ENCODE measurements at regions of chr6 and their contacts with region 1.

Region 1: GRCh38 chr6:291697-292505 is at the start of gene DUSP22:
- DNase-seq: peak; percentile 94
- H3K4me3 Mint-ChIP-seq: peak within 1 kb of the TSS; percentile 86
- H3K27ac Mint-ChIP-seq: peak within 1 kb of the TSS; percentile 95
- H3K4me1 Mint-ChIP-seq: peaks cover 45% of the 10 kb centered on the region
- H3K27me3 Mint-ChIP-seq: no peaks in the 10 kb centered on the region
- total RNA-seq, gene DUSP22: 22.5 and 24.0 TPM in 2 replicates

Region 2: GRCh38 chr6:227074-227782 is 64.7 kb before region 1 on chr6:
- intact Hi-C with region 1: loop called (anchors 1 kb)
- DNase-seq: no peak
- H3K4me3 Mint-ChIP-seq: no peak overlapping the region
- H3K27ac Mint-ChIP-seq: peak overlapping the region; percentile 58
- H3K4me1 Mint-ChIP-seq: peaks cover 61% of the 10 kb centered on the region
- H3K27me3 Mint-ChIP-seq: no peaks in the 10 kb centered on the region

Region 3: GRCh38 chr6:251920-252319 is 40.0 kb before region 1 on chr6:
- intact Hi-C with region 1: loop called (anchors 5 kb)
- DNase-seq: peak; percentile 61
- H3K4me3 Mint-ChIP-seq: peak overlapping the region; percentile 46
- H3K27ac Mint-ChIP-seq: peak overlapping the region; percentile 80
- H3K4me1 Mint-ChIP-seq: peaks cover 29% of the 10 kb centered on the region
- H3K27me3 Mint-ChIP-seq: no peaks in the 10 kb centered on the region

Region 4: GRCh38 chr6:277746-278145 is 14.2 kb before region 1 on chr6:
- intact Hi-C with region 1: no loop called
- DNase-seq: no peak
- H3K4me3 Mint-ChIP-seq: no peak overlapping the region
- H3K27ac Mint-ChIP-seq: no peak overlapping the region
- H3K4me1 Mint-ChIP-seq: peaks cover 2% of the 10 kb centered on the region
- H3K27me3 Mint-ChIP-seq: peaks cover 9% of the 10 kb centered on the region

Region 5: GRCh38 chr6:319177-320131 is 27.6 kb after region 1 on chr6:
- intact Hi-C with region 1: loop called (anchors 2 kb)
- DNase-seq: no peak
- H3K4me3 Mint-ChIP-seq: no peak overlapping the region
- H3K27ac Mint-ChIP-seq: no peak overlapping the region
- H3K4me1 Mint-ChIP-seq: peaks cover 7% of the 10 kb centered on the region
- H3K27me3 Mint-ChIP-seq: no peaks in the 10 kb centered on the region

Region 6: DNA sequence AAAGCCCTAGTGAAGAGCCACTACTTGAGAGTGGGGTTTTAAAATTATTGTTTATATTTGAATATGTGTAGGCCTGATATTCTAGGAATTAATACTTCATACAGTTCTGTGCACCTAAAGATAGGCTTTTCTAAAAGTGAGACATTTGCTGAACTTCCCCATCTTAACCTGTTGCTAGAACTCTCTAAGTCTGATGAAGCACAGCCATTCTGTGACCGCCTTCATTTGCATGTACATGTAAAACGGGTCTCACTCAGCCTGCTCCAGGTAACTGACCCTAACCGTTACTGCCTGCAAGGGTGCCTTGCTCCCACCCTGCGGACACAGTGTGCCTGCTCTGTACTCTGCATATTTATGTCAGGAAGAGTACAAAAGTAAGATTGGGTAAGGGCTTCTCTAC is 55.3 kb after region 1 on chr6:
- intact Hi-C with region 1: no loop called
- DNase-seq: no peak
- H3K4me3 Mint-ChIP-seq: no peak overlapping the region
- H3K27ac Mint-ChIP-seq: no peak overlapping the region
- H3K4me1 Mint-ChIP-seq: peaks cover under 1% of the 10 kb centered on the region
- H3K27me3 Mint-ChIP-seq: no peaks in the 10 kb centered on the region

Region 7: DNA sequence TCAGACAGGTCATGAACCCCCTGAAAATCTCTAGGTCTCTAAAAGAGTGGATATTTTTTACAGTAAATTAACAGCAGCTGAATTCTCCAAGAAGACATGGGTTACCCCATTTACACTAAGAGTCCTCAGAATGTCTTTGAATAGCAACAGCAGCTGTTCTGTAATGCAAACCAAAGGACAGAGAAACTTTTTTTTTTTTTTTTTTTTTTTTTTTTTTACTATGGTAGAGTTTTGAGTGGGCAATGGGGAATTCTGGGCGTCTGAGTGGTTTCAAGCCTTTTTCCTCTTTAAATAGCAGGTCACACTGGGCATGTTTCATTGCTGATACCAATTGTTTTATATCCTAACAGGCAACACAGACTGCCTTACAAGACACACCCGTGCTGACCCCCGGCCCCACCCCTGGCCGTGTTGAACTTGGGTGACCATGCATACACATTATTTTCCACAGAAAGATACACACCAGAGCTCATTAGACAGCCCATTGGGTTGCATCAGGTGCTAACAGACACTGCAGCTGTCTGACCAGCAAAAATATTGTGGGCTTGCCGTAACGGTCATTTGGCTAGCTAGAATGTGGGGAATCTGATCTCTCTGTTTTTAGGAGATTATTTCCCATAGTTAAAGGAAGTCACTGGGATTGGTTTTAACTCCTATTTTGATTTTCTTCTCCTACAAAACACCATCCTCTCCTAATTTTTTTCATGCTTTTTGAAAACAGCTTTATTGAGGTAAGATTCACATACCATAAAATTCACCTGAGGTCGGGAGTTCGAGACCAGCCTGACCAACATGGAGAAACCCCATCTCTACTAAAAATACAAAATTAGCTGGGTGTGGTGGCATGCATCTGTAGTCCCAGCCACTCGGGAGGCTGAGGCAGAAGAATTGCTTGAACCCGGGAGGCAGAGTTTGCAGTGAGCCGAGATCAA is 73.0 kb after region 1 on chr6:
- intact Hi-C with region 1: no loop called
- DNase-seq: no peak
- H3K4me3 Mint-ChIP-seq: no peak overlapping the region
- H3K27ac Mint-ChIP-seq: no peak overlapping the region
- H3K4me1 Mint-ChIP-seq: no peaks in the 10 kb centered on the region
- H3K27me3 Mint-ChIP-seq: peaks cover 8% of the 10 kb centered on the region

Region 8: GRCh38 chr6:391559-392440 is 99.9 kb after region 1 on chr6 and contains the start of gene IRF4:
- intact Hi-C with region 1: loop called (anchors 1 kb)
- DNase-seq: peak; percentile 92
- H3K4me3 Mint-ChIP-seq: peak within 1 kb of the TSS; percentile 93
- H3K27ac Mint-ChIP-seq: peak within 1 kb of the TSS; percentile 98
- H3K4me1 Mint-ChIP-seq: peaks cover 40% of the 10 kb centered on the region
- H3K27me3 Mint-ChIP-seq: peaks cover 2% of the 10 kb centered on the region
- total RNA-seq, gene IRF4: 831 and 846 TPM in 2 replicates

Region 9: DNA sequence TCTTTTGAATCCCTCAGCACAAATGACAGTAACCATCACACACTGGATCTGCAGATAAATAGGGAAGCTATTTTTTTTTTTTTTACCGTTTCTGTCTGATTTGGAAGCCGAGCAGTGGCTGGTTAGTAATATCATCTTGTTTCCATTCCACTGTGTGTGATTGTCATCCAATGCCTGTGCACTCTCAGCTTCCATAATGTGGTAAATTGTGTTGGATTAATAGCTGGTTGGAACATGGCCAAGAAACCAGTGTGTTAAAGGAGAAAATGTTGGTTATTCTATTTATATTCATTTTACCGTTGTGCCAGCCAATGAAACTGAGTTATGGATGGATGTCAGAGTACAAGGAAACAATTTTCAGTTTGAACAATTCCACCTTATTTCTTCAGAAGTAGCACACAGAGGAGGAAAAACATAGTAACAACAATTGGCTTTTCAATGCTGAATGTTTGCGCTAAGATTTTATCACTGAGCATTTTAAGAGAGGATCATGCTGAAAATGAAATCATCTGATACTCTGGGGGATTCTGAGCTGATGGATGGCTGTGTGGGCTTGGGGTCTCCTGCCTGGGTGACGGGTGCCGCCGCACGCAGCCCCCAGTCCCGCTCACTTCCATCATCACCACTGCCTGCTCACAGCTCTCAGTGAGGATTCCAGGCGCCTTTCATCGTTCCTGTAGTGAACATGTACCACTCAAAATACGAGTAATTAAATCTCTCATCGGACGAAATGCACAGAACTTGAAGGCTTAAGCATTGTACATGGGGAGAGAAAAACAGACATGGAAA is 441.7 kb after region 1 on chr6:
- intact Hi-C with region 1: no loop called
- DNase-seq: no peak
- H3K4me3 Mint-ChIP-seq: no peak overlapping the region
- H3K27ac Mint-ChIP-seq: no peak overlapping the region
- H3K4me1 Mint-ChIP-seq: no peaks in the 10 kb centered on the region
- H3K27me3 Mint-ChIP-seq: peaks cover 29% of the 10 kb centered on the region

Measured in activated CD4-positive, alpha-beta T cell treated with anti-CD3 and anti-CD28 coated beads, Interleukin-2, amount 10 ng/mL, durations not matched to agents 24 days and 14 days (primary cell).